Naive thymus-derived CD4-positive, alpha-beta T cell (primary cell): ENCODE measurements at regions of chr12 and their contacts with region 1.

Region 1: GRCh38 chr12:12645485-12645884 is 33.8 kb downstream of the CREBL2 start:
- DNase-seq: peak in 8 of 9 donors; percentile 24 to 76 (median 62)
- ATAC-seq: peak; percentile 80
- H3K4me3 ChIP-seq: no peak overlapping the region
- H3K4me3 Mint-ChIP-seq: no peak overlapping the region
- H3K27ac ChIP-seq: no peak overlapping the region
- H3K27ac Mint-ChIP-seq: peak overlapping the region in 3 of 9 donors; percentile 42 to 79 (median 67)
- H3K4me1 ChIP-seq: no peaks in the 10 kb centered on the region
- H3K4me1 Mint-ChIP-seq: peaks cover 0 to 11% (median 3%) of the 10 kb centered on the region in 7 donors
- H3K27me3 ChIP-seq: no peaks in the 10 kb centered on the region
- H3K27me3 Mint-ChIP-seq: no peaks in the 10 kb centered on the region

Region 2: DNA sequence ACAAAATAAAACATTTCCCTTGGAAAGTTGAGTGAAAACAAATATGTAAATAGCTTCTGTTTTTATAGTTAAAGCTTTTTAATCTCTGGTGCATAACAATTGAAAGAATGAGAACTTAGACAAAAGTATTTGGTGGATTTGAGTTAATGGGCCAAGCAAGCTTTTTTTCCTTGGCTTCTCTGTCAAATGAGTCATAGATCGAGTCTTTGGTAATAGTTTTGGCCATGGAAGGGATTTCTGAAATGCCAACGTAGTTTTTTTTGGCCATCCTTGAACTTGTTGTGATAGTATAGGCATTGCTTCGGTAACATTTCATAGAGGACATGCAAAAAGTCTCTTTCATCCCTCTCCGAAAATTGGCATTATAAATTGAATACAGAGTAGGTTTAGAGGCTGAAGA is 15.6 kb after region 1 on chr12:
- CTCF ChIA-PET with region 1: interaction called, 14 read pairs
- POLR2A ChIA-PET with region 1: no interaction called
- intact Hi-C with region 1: loop called in 1 of 2 experiments (anchors 2 kb)
- DNase-seq: no peak
- ATAC-seq: no peak
- H3K4me3 ChIP-seq: no peak overlapping the region
- H3K4me3 Mint-ChIP-seq: no peak overlapping the region
- H3K27ac ChIP-seq: no peak overlapping the region
- H3K27ac Mint-ChIP-seq: peak overlapping the region in 1 of 9 donors; percentile 82
- H3K4me1 ChIP-seq: no peaks in the 10 kb centered on the region
- H3K4me1 Mint-ChIP-seq: peaks cover 0 to 3% (median under 1%) of the 10 kb centered on the region in 7 donors
- H3K27me3 ChIP-seq: no peaks in the 10 kb centered on the region
- H3K27me3 Mint-ChIP-seq: no peaks in the 10 kb centered on the region